ENCODE measurements at regions of chr2 and their contacts with region 1.

Region 1: GRCh38 chr2:128062571-128062970 is 28.4 kb upstream of the UGGT1 start:
- DNase-seq: no peak
- H3K4me3 ChIP-seq: no peak overlapping the region
- H3K27ac ChIP-seq: no peak overlapping the region
- H3K4me1 ChIP-seq: no peaks in the 10 kb centered on the region
- CTCF ChIP-seq: no peak

Region 2: DNA sequence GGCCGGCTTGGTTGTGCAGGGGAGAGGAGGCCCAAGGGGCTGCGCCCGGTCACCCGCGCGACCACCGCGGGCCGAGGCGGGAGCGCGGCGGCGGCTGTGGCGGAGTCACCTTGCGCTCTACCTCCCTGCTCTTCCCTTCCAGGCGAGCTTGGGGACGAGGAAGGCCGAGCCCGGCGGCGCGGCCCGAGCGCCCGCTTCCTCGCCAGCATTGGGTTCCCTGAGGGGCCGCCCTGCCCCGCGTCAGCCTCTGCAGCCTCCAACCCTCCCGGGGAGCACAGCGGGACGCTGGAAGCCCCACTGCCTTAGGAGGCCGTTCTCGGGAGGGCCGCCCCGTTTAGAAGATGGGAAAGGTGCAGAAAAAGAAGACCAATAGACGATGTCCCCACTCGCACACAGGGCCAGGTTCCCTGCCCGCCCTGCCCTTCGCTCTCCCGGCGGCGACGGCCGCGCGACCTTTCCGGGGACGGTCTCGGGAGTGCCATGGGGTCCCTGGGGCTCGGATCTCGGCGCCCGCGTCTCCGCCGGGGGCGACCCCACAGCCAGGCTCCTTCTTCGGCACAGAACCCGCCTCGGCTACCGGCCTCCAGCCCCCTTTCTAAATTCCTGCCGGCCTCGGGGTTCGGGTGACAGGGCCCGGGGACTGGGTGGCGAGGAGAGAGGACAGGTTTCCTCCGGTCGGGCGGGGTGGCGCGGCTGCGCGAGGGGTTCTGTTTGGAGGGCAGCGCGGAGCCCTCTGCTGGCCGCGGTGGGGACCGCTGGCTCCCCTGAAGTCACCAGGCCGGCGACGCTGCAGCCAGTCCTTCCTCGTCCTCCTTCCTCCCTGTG is 170.6 kb after region 1 on chr2:
- CTCF ChIA-PET with region 1: no interaction called
- POLR2A ChIA-PET with region 1: no interaction called
- intact Hi-C with region 1: loop called (anchors 1 kb)
- DNase-seq: peak; percentile 76
- H3K4me3 ChIP-seq: peak overlapping the region; percentile 67
- H3K27ac ChIP-seq: no peak overlapping the region
- H3K4me1 ChIP-seq: peaks cover 6% of the 10 kb centered on the region
- CTCF ChIP-seq: peak; percentile 89

Region 3: GRCh38 chr2:128321784-128322714 is 259.5 kb after region 1 on chr2:
- CTCF ChIA-PET with region 1: no interaction called
- POLR2A ChIA-PET with region 1: no interaction called
- intact Hi-C with region 1: loop called (anchors 5 kb)
- DNase-seq: peak; percentile 78
- H3K4me3 ChIP-seq: peak overlapping the region; percentile 67
- H3K27ac ChIP-seq: no peak overlapping the region
- H3K4me1 ChIP-seq: peaks cover 3% of the 10 kb centered on the region
- CTCF ChIP-seq: peak; percentile 85

Measured in OCI-LY7 (cell line).